Activated CD4-positive, alpha-beta memory T cell treated with anti-CD3 and anti-CD28 coated beads for 36 hours (primary cell): ENCODE measurements at regions of chr2 and their contacts with region 1.

Region 1: DNA sequence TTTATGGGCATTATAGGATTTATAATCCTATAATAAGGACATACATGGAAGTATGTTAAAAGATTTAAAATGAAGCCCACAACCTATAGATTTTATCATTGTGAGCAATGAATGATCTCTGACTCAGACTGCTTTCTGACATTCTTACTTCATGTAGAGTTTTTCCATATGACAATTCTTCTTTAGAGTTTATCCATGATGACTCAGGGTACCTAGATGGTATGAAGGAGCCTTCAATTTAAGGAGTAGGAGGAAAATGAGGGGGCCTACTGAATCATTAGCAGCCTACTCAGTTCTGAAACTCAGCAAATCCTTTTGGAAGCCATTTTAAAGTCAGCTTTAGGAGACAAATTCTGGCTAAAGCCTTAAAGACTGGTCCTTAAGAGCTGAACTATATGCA is 10.4 kb downstream of the PELI1 start:
- DNase-seq: no peak
- H3K4me3 Mint-ChIP-seq: peak overlapping the region; percentile 12
- H3K27ac Mint-ChIP-seq: peak overlapping the region; percentile 83
- H3K4me1 Mint-ChIP-seq: peaks cover 84% of the 10 kb centered on the region
- H3K27me3 Mint-ChIP-seq: no peaks in the 10 kb centered on the region

Region 2: DNA sequence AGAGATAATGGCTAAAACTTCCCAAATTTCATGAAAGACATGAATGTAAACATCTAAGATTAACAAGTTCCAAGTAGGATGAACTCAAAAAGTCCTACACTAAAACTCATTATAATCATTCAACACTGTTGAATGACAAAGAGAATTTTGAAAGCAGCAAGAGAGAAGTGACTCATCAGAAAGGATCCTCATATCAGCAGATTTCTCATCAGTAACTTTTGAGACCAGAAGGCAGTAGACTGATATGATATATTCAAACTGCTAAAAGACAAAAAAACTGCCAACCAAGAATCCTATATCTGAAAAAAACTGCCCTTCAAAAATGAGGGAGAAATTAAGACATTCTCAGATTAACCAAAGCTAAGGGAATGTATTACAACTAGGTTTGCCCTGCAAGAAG is 1213.8 kb before region 1 on chr2:
- CTCF ChIA-PET with region 1: no interaction called
- POLR2A ChIA-PET with region 1: no interaction called
- intact Hi-C with region 1: no loop called
- DNase-seq: no peak
- H3K4me3 Mint-ChIP-seq: no peak overlapping the region
- H3K27ac Mint-ChIP-seq: no peak overlapping the region
- H3K4me1 Mint-ChIP-seq: no peaks in the 10 kb centered on the region
- H3K27me3 Mint-ChIP-seq: no peaks in the 10 kb centered on the region

Region 3: GRCh38 chr2:64062829-64063228 is 71.0 kb before region 1 on chr2:
- CTCF ChIA-PET with region 1: no interaction called
- POLR2A ChIA-PET with region 1: no interaction called
- intact Hi-C with region 1: loop called (anchors 2 kb)
- DNase-seq: no peak
- H3K4me3 Mint-ChIP-seq: no peak overlapping the region
- H3K27ac Mint-ChIP-seq: no peak overlapping the region
- H3K4me1 Mint-ChIP-seq: peaks cover 29% of the 10 kb centered on the region
- H3K27me3 Mint-ChIP-seq: peaks cover 2% of the 10 kb centered on the region

Region 4: GRCh38 chr2:64101141-64101591 is 32.7 kb before region 1 on chr2:
- CTCF ChIA-PET with region 1: interaction called, 4 read pairs
- POLR2A ChIA-PET with region 1: interaction called, 5 read pairs
- intact Hi-C with region 1: loop called (anchors 1 kb)
- DNase-seq: no peak
- H3K4me3 Mint-ChIP-seq: peak overlapping the region; percentile 49
- H3K27ac Mint-ChIP-seq: peak overlapping the region; percentile 78
- H3K4me1 Mint-ChIP-seq: peaks cover 63% of the 10 kb centered on the region
- H3K27me3 Mint-ChIP-seq: no peaks in the 10 kb centered on the region

Region 5: GRCh38 chr2:64114063-64114911 is 19.5 kb before region 1 on chr2:
- CTCF ChIA-PET with region 1: interaction called, 6 read pairs
- POLR2A ChIA-PET with region 1: interaction called, 9 read pairs
- intact Hi-C with region 1: loop called (anchors 1 kb)
- DNase-seq: no peak
- H3K4me3 Mint-ChIP-seq: no peak overlapping the region
- H3K27ac Mint-ChIP-seq: peak overlapping the region; percentile 85
- H3K4me1 Mint-ChIP-seq: peaks cover 70% of the 10 kb centered on the region
- H3K27me3 Mint-ChIP-seq: no peaks in the 10 kb centered on the region

Region 6: GRCh38 chr2:64123740-64124139 is 10.1 kb before region 1 on chr2:
- CTCF ChIA-PET with region 1: interaction called, 4 read pairs
- POLR2A ChIA-PET with region 1: no interaction called
- intact Hi-C with region 1: loop called (anchors 1 kb)
- DNase-seq: no peak
- H3K4me3 Mint-ChIP-seq: no peak overlapping the region
- H3K27ac Mint-ChIP-seq: no peak overlapping the region
- H3K4me1 Mint-ChIP-seq: peaks cover 55% of the 10 kb centered on the region
- H3K27me3 Mint-ChIP-seq: no peaks in the 10 kb centered on the region

Region 7: DNA sequence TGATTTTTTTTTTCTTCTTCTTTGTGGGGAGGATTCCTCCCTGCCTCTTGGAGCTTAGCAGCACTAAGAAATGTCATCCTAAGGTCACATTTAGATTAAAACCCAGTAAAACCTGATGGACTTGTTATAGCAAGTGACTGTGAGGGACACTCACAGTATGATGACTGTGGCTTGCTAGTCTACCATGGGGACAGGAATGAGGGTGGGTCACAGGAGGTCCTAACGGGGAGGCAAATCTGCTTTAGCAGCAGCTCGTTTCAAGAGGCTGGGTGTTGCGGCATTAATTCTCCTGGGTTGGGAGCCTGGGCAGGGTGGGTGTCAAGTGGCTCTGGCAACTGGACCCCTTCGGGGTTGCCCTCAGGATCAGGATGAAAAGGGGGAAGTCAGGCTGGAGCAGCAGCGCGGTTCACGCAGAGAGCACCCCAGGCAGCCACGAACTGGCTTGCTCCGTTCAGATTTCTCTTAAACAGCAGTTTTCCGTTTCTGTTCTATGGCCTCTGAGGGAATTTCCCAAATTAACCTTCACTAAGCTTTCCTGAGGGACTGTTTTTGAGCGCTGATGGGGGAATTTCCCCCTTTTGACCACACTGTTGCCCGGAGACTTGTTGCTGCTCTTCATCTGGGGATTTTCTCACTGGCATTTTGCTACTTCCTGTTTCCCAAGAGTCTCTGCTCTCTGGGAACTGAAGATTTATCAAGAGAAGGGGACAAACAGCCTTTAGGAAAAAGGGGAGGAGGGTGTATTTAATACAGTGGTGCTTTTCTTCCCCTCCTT is 70.2 kb after region 1 on chr2:
- CTCF ChIA-PET with region 1: interaction called, 3 read pairs
- POLR2A ChIA-PET with region 1: interaction called, 12 read pairs
- intact Hi-C with region 1: no loop called
- DNase-seq: peak; percentile 69
- H3K4me3 Mint-ChIP-seq: peak overlapping the region; percentile 71
- H3K27ac Mint-ChIP-seq: peak overlapping the region; percentile 87
- H3K4me1 Mint-ChIP-seq: peaks cover 83% of the 10 kb centered on the region
- H3K27me3 Mint-ChIP-seq: no peaks in the 10 kb centered on the region

Region 8: GRCh38 chr2:64228126-64228678 is 94.4 kb after region 1 on chr2:
- CTCF ChIA-PET with region 1: no interaction called
- POLR2A ChIA-PET with region 1: no interaction called
- intact Hi-C with region 1: no loop called
- DNase-seq: peak; percentile 76
- H3K4me3 Mint-ChIP-seq: peak overlapping the region; percentile 88
- H3K27ac Mint-ChIP-seq: peak overlapping the region; percentile 82
- H3K4me1 Mint-ChIP-seq: peaks cover 33% of the 10 kb centered on the region
- H3K27me3 Mint-ChIP-seq: peaks cover 2% of the 10 kb centered on the region

Region 9: GRCh38 chr2:64374686-64375085 is 240.9 kb after region 1 on chr2:
- CTCF ChIA-PET with region 1: no interaction called
- POLR2A ChIA-PET with region 1: no interaction called
- intact Hi-C with region 1: no loop called
- DNase-seq: no peak
- H3K4me3 Mint-ChIP-seq: no peak overlapping the region
- H3K27ac Mint-ChIP-seq: no peak overlapping the region
- H3K4me1 Mint-ChIP-seq: no peaks in the 10 kb centered on the region
- H3K27me3 Mint-ChIP-seq: no peaks in the 10 kb centered on the region